ENCODE measurements at regions of chr13 and their contacts with region 1.

Region 1: GRCh38 chr13:26872525-26873385 is 112.2 kb upstream of the GPR12 start:
- DNase-seq: no peak
- H3K4me3 ChIP-seq: no peak overlapping the region
- H3K27ac ChIP-seq: no peak overlapping the region
- H3K27me3 ChIP-seq: no peaks in the 10 kb centered on the region
- CTCF ChIP-seq: peak; percentile 69

Region 2: GRCh38 chr13:26707122-26708006 is 165.4 kb before region 1 on chr13:
- CTCF ChIA-PET with region 1: interaction called, 10 read pairs
- POLR2A ChIA-PET with region 1: no interaction called
- DNase-seq: peak; percentile 7
- H3K4me3 ChIP-seq: no peak overlapping the region
- H3K27ac ChIP-seq: no peak overlapping the region
- H3K27me3 ChIP-seq: peaks cover 6% of the 10 kb centered on the region
- CTCF ChIP-seq: peak; percentile 65